ENCODE measurements at regions of chr15 and their contacts with region 1.

Region 1: GRCh38 chr15:39799552-39800011 is 16.9 kb upstream of the FSIP1 start:
- DNase-seq: no peak
- ATAC-seq: no peak
- H3K4me3 Mint-ChIP-seq: no peak overlapping the region
- H3K27ac Mint-ChIP-seq: no peak overlapping the region
- H3K4me1 Mint-ChIP-seq: no peaks in the 10 kb centered on the region
- H3K27me3 Mint-ChIP-seq: peaks cover 25% of the 10 kb centered on the region

Region 2: DNA sequence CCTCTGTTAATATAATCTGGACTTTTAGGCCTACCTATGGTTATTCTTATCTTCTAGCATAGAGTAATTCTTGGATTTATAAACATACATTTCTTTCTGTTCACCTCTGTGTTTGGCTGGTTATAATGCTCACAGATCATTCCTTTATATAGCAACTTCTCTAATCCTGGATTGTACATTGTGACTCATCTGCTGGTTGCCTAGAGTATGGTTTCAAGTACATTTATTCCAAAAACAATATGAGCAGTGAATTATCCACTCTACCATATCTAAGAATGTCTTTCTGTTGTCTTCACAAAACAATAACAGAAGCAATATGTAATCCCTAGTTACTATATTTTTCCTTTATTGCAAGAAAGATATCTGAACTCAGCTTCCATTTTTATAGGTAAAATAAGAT is 52.3 kb before region 1 on chr15:
- CTCF ChIA-PET with region 1: no interaction called
- DNase-seq: no peak
- ATAC-seq: no peak
- H3K4me3 Mint-ChIP-seq: no peak overlapping the region
- H3K27ac Mint-ChIP-seq: no peak overlapping the region
- H3K4me1 Mint-ChIP-seq: peaks cover 3% of the 10 kb centered on the region
- H3K27me3 Mint-ChIP-seq: peaks cover 39% of the 10 kb centered on the region

Region 3: DNA sequence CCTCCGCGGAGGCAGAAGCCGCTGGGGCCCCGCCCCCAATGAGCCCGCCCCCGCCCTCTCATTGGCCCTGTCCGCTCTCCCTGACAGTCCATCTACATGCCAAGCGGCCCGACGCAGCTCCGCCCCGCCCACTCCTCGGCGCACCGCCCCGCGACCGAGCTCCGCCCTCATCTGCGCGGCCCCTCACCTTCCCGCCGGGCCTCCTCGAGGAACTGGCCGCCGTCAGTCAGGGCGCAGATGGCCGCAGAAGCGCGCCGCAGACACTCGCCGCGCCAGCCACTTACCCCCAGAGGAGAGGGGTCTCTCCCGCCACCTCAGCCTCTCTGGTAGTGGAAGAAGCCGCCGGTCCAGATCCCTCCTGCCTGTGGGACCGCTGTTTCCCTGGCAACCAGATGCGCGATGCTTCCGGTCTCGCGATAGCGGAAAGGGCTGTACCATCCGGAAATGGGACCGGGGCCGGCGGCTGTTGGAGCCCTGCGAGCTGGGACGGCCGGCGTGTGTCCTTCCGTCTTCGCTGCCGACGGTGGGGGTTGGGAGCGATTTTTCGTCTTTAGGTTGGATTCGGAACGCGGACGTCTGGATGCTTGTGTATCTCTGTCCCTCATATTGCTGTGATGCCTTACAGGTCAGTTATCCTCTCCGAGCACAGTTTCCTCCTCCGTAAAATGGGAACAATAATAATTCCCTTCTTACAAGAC is 17.0 kb before region 1 on chr15 and contains the start of gene FSIP1:
- CTCF ChIA-PET with region 1: interaction called, 14 read pairs
- DNase-seq: peak; percentile 98
- ATAC-seq: peak; percentile 99
- H3K4me3 Mint-ChIP-seq: peak within 1 kb of the TSS; percentile 91
- H3K27ac Mint-ChIP-seq: peak within 1 kb of the TSS; percentile 77
- H3K4me1 Mint-ChIP-seq: peaks cover 48% of the 10 kb centered on the region
- H3K27me3 Mint-ChIP-seq: no peaks in the 10 kb centered on the region
- total RNA-seq, gene FSIP1: 0.50 to 0.56 TPM

Measured in activated CD8-positive, alpha-beta memory T cell treated with anti-CD3 and anti-CD28 coated beads, Interleukin-2, amount 10 ng/mL, durations not matched to agents 7 days and 5 days (primary cell).